Right ventricle myocardium inferior (tissue), 1 donor: ENCODE measurements at regions of chr15 and their contacts with region 1.

Region 1: DNA sequence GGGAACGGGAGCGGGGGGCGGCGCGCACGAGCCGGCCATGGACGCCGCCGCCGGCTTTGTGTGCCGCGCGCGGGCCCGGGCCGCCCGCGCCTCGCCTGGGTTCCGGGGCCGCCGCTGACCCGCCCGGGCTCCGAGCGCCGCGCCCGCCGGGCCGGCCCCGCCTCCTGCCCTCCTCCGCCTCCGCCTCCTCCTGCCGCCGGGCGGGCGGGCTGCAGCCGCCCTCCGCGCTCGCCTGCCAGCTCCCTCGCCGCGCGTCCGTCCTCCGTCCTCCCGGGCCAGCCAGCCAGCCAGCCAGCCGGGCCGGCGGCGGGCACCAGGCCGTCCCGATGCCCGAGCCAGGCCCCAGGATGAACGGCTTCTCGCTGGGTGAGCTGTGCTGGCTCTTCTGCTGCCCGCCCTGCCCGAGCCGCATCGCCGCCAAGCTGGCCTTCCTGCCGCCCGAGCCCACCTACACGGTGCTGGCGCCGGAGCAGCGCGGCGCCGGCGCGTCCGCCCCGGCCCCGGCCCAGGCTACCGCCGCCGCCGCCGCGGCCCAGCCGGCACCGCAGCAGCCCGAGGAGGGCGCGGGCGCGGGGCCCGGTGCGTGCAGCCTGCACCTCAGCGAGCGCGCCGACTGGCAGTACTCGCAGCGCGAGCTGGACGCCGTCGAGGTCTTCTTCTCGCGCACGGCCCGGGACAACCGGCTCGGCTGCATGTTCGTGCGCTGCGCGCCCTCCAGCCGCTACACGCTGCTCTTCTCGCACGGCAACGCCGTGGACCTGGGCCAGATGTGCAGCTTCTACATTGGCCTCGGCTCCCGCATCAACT is at the start of gene ABHD17C:
- DNase-seq: peak; percentile 83
- ATAC-seq: peak; percentile 84
- total RNA-seq, gene ABHD17C: 7.5 TPM

Region 2: DNA sequence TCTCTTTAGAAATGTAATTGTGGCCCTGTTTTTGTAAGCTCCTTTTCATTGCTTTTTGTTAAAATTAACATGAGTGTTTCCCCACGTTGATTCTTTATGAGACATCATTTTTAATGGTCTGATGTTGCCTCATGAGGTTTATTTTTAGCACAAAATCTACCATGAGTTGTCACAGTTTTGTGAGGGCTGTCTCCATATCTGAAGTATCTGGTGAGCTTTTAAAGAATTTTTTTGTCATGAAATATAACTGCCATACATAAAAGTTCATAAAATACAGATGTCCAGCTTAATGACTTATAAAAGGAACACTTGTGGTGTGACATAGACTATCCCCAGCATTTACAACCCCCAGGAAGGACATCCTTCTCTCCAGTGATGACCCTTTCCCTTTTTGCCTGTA is 49.5 kb after region 1 on chr15:
- intact Hi-C with region 1: no loop called
- DNase-seq: no peak
- ATAC-seq: no peak

Region 3: DNA sequence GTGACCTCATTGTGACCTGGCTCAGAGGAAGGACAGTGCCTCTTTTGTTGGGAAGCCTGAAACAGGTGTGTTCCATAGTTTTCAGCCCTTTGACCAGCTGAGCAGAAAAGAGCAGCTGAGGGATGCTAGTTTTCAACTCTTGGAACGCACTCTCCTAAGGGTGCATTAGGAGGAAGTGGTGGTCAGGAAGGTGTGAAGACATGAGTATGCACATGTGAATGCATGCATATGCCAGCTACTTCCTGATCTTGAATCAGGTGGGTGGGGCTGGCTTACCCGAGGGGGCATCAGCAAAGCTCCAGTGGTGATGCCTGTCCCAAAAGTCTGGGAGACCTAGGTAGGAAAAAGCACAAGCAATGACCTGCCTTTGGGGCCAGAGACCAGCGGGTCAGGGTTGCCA is 60.6 kb after region 1 on chr15:
- intact Hi-C with region 1: no loop called
- DNase-seq: no peak
- ATAC-seq: no peak

Region 4: GRCh38 chr15:80989518-80990478 is 294.5 kb after region 1 on chr15 and contains the start of gene MESD:
- intact Hi-C with region 1: loop called (anchors 10 kb)
- DNase-seq: peak; percentile 99
- ATAC-seq: peak; percentile 98
- total RNA-seq, gene MESD: 14.0 TPM